ENCODE measurements at regions of chr11 and their contacts with region 1.

Region 1: DNA sequence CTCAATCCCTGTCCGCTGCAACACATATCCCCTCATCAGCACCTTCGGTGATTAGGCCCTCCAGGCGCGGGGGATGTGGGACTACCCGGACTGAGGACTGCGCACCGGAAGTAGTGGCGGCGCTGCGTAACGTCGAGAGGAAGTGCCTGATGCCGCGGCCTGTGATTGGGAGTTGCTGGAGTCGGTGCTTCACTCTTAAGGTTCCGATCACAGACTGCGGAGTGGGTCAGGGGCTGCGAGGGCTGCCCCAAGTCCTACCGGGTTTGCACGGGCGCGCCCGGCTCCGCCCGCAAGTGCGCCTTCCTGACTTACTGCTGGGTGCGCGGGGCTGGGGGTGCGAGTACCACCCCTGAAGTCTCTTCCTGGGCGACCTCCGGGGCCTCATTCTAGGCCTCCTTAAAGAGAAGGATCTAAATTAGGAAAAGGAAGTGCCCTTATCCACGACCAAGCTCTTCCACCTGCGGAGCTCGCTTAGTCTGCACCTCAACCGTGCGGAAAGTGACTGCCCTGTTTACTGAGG is at the start of gene ALKBH3:
- ATAC-seq: peak; percentile 69 to 100 (median 99)
- H3K4me3 ChIP-seq: peak within 1 kb of the TSS; percentile 42 to 70 (median 55)
- H3K27ac ChIP-seq: peak within 1 kb of the TSS in 1 of 2 donors; percentile 43
- H3K4me1 ChIP-seq: peaks cover 7 to 9% of the 10 kb centered on the region in 2 donors
- total RNA-seq, gene ALKBH3: 4.8 to 44.0 (median 22.0) TPM

Region 2: DNA sequence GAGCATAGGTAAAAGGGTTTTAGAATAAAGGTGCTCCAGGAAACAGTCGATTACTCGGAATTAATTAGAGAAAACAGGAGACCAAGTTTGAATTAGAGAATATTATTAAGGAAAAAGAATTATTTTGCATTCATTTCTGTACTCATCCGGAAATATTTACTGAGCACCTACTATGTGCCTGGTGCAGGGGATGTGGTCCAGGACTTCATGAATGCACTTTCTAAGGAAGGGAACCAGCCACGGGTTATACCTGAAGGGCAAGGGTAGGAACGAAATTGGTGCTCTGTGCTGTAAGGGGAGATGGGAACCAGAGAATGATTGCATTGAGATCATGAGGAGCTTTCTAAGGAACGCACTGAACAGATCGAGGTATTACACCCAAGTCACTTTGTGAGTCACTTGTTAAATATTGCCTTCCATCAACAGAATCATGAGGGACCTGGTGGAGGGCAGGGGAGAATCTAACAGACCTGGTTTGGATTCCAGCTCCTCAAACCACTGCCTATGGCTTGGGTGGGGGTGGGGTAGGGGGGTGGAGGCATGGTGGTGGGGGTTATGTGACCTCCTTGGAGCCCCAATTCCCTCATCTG is 102.6 kb after region 1 on chr11:
- in situ Hi-C with region 1: no loop called
- ATAC-seq: no peak
- H3K4me3 ChIP-seq: no peak overlapping the region
- H3K27ac ChIP-seq: no peak overlapping the region
- H3K4me1 ChIP-seq: peaks cover 3 to 16% of the 10 kb centered on the region in 2 donors

Region 3: DNA sequence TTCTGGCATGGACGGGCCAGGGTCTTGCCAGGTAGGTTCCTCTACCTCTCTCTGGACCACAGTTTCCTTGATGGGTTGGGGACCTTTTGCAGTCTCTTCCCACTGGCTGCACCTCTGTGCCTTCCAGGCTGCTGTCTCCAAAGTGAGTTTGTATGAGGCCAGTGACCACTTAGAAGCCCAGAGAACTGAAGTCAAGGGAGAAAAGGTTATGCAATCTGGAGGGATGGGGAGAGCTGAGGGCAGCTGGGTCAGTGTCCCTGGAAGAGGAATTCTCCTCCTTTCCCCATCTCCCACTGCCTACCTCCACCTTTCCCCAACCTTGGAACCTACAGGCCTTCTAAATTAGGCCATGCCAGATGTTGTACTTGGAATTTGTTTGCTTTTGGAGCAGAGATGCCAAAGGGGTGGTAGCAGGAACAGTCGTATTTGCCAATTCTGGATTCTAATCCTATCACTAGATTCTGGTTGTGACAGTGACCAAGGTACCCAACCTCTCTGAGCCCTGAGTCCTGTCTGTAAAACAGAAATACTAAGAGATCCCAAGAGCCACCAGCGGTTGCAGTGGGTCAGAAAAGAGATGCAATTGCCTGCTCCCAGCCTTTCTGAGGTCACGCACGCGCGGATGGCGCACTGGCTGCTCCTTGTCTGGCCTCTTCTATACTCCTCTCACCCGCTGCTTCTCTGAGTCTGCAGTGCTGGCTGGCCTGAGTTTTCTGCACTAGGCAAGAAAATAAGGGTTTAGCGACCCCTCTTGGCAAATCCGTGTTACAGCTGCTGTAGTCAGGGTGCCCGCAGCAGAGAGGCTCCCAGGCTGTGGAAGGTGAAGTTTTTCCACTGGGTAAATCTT is 156.3 kb after region 1 on chr11:
- in situ Hi-C with region 1: loop called in 4 of 9 experiments (anchors 10 to 25 kb)
- ATAC-seq: peak; percentile 88 to 100 (median 99)
- H3K4me3 ChIP-seq: no peak overlapping the region
- H3K27ac ChIP-seq: no peak overlapping the region
- H3K4me1 ChIP-seq: peaks cover 4% of the 10 kb centered on the region in 2 donors

Region 4: DNA sequence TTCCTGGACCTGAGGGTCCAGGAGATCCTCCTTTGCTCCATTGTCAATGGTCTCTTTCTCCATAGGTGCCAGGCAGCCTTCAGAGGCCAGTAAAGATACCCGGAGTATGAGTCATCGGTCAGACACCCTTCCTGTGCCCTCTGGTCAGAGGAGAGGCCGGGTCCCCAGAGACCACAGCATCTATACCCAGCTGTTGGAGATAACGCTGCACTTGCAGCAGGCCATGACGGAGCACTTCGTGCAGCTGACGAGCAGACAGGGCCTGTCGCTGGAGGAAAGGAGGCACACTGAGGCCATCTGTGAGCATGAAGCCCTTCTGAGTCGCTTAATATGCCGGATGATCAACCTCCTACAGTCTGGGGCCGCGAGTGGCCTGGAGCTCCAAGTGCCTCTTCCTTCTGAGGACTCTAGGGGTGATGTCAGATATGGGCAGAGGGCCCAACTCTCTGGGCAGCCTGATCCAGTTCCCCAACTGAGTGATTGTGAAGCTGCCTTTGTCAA is 167.3 kb after region 1 on chr11 and contains the start of gene ACCSL:
- in situ Hi-C with region 1: loop called in 5 of 9 experiments (anchors 10 to 25 kb)
- ATAC-seq: no peak
- H3K4me3 ChIP-seq: no peak within 1 kb of the TSS
- H3K27ac ChIP-seq: no peak within 1 kb of the TSS
- H3K4me1 ChIP-seq: no peaks in the 10 kb centered on the region
- total RNA-seq, gene ACCSL: not detected

Region 5: GRCh38 chr11:44065841-44066731 is 185.4 kb after region 1 on chr11 and contains the start of gene ACCS:
- in situ Hi-C with region 1: loop called in 1 of 9 experiments (anchors 25 kb)
- ATAC-seq: peak; percentile 90 to 98 (median 96)
- H3K4me3 ChIP-seq: peak within 1 kb of the TSS in 4 of 5 donors; percentile 5 to 45 (median 18)
- H3K27ac ChIP-seq: peak within 1 kb of the TSS in 1 of 2 donors; percentile 75
- H3K4me1 ChIP-seq: peaks cover 0 to 10% of the 10 kb centered on the region in 2 donors
- total RNA-seq, gene ACCS: 0.75 to 28.9 (median 4.6) TPM in 7 of 8 experiments, not detected in the other

Region 6: DNA sequence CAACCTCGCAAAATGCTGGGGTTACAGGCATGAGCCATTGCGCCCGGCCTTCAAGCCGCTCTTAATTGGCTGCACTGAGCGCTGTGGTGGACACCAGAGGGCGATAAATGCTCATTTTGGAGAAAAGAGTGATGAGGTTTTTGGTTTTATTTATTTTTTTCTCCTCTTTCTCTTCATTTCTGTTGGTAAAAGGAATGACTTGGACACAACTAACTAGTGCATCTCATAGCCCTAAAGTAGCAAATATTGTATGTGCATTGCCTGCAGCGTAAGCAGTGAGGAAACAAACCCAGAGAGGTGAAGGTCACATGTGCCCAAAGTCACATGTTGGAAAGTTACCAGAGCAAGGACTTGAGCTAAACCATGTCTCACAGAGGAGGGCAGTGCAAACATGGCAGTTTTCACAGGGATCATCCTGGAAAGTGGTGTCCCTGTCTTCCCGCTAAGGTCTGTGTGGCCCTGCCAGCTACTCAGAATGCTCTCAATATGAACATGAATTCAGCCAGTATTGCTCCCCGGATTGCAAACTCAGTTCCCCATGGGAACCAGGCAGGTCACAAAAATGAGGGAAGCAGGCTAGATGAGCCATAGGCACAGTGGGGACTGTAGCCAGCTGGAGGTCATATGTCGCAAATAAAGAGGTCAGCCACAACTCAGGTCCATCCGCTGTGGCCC is 676.2 kb after region 1 on chr11:
- in situ Hi-C with region 1: no loop called
- ATAC-seq: peak; percentile 56 to 87 (median 74)
- H3K4me3 ChIP-seq: no peak overlapping the region
- H3K27ac ChIP-seq: no peak overlapping the region
- H3K4me1 ChIP-seq: no peaks in the 10 kb centered on the region

Region 7: DNA sequence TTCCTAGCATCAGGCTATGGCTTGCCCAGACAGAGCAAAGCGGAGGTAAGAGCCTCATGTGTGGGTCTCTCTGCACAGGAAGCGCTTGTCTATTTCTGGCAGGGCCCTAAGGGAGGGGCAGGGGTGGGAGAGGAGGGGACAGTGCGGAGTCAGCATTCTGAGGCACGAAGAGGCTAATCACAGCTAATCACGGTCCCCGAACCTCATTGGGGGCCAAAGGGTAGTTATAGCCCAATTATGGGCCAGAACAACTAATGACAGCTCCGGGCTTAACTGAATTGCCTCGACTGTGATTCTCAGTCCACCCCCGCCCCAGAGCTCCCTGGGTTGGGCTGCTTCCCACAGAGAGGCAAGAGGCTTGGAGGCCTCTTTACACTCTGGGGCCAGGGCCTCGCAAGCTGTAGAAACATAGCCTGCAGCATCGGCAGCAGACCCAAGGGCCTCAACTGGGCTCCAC is 1193.0 kb after region 1 on chr11:
- in situ Hi-C with region 1: no loop called
- ATAC-seq: peak in 3 of 8 experiments; percentile 21 to 52 (median 44)
- H3K4me3 ChIP-seq: no peak overlapping the region
- H3K27ac ChIP-seq: no peak overlapping the region
- H3K4me1 ChIP-seq: peaks cover 0 to 8% of the 10 kb centered on the region in 2 donors

Measured in motor neuron (in vitro differentiated cells).